WTC11 (cell line): ENCODE measurements at regions of chr2 and their contacts with region 1.

Region 1: GRCh38 chr2:36770542-36771287 is 74.2 kb downstream of the VIT start:
- DNase-seq: peak; percentile 82
- ATAC-seq: peak; percentile 96
- H3K4me3 Mint-ChIP-seq: no peak overlapping the region
- H3K27ac Mint-ChIP-seq: no peak overlapping the region
- H3K4me1 Mint-ChIP-seq: peaks cover 10% of the 10 kb centered on the region
- H3K27me3 Mint-ChIP-seq: no peaks in the 10 kb centered on the region
- CTCF ChIP-seq: peak; percentile 98

Region 2: GRCh38 chr2:36695746-36696415 is 74.8 kb before region 1 on chr2:
- CTCF ChIA-PET with region 1: interaction called, 29 read pairs
- POLR2A ChIA-PET with region 1: no interaction called
- DNase-seq: no peak
- ATAC-seq: peak; percentile 92
- H3K4me3 Mint-ChIP-seq: no peak overlapping the region
- H3K27ac Mint-ChIP-seq: no peak overlapping the region
- H3K4me1 Mint-ChIP-seq: peaks cover 19% of the 10 kb centered on the region
- H3K27me3 Mint-ChIP-seq: no peaks in the 10 kb centered on the region
- CTCF ChIP-seq: no peak

Region 3: GRCh38 chr2:36753706-36754221 is 17.0 kb before region 1 on chr2:
- CTCF ChIA-PET with region 1: interaction called, 16 read pairs
- POLR2A ChIA-PET with region 1: no interaction called
- DNase-seq: peak; percentile 21
- ATAC-seq: peak; percentile 86
- H3K4me3 Mint-ChIP-seq: no peak overlapping the region
- H3K27ac Mint-ChIP-seq: peak overlapping the region; percentile 98
- H3K4me1 Mint-ChIP-seq: peaks cover 55% of the 10 kb centered on the region
- H3K27me3 Mint-ChIP-seq: no peaks in the 10 kb centered on the region; the same call in 1 of the 2 replicates
- CTCF ChIP-seq: no peak

Region 4: GRCh38 chr2:36800381-36800780 is 29.7 kb after region 1 on chr2:
- CTCF ChIA-PET with region 1: interaction called, 10 read pairs
- POLR2A ChIA-PET with region 1: no interaction called
- DNase-seq: no peak
- ATAC-seq: no peak
- H3K4me3 Mint-ChIP-seq: no peak overlapping the region
- H3K27ac Mint-ChIP-seq: no peak overlapping the region
- H3K4me1 Mint-ChIP-seq: peaks cover 10% of the 10 kb centered on the region
- H3K27me3 Mint-ChIP-seq: no peaks in the 10 kb centered on the region
- CTCF ChIP-seq: no peak

Region 5: DNA sequence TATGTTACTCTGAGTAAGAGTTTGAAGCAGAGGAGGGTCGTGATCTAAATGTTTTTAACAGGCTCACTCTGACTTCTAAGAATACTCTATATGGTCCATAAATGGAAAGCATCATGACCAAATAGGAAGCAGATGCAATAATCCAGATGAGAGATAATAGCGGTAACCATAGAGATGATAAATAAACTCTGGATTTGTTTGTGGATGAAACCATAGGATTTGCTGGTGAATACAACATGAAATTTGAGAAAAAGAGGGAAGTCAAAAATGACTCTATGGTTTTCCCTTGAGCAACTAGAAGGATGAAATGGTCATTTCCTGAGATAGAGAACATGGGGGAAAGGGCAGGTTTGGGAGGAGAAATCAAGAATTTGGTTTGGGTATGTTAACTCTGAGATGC is 309.6 kb after region 1 on chr2:
- CTCF ChIA-PET with region 1: no interaction called
- POLR2A ChIA-PET with region 1: no interaction called
- DNase-seq: no peak
- ATAC-seq: no peak
- H3K4me3 Mint-ChIP-seq: no peak overlapping the region
- H3K27ac Mint-ChIP-seq: no peak overlapping the region
- H3K4me1 Mint-ChIP-seq: no peaks in the 10 kb centered on the region; the same call in 1 of the 2 replicates
- H3K27me3 Mint-ChIP-seq: no peaks in the 10 kb centered on the region
- CTCF ChIP-seq: no peak